AG04450 (cell line): ENCODE measurements at regions of chr20 and their contacts with region 1.

Region 1: GRCh38 chr20:61234008-61234802 is 17.9 kb upstream of the CDH4 start:
- DNase-seq: no peak
- H3K4me3 ChIP-seq: no peak overlapping the region
- H3K27ac ChIP-seq: no peak overlapping the region
- H3K27me3 ChIP-seq: peaks cover 8% of the 10 kb centered on the region
- CTCF ChIP-seq: no peak

Region 2: DNA sequence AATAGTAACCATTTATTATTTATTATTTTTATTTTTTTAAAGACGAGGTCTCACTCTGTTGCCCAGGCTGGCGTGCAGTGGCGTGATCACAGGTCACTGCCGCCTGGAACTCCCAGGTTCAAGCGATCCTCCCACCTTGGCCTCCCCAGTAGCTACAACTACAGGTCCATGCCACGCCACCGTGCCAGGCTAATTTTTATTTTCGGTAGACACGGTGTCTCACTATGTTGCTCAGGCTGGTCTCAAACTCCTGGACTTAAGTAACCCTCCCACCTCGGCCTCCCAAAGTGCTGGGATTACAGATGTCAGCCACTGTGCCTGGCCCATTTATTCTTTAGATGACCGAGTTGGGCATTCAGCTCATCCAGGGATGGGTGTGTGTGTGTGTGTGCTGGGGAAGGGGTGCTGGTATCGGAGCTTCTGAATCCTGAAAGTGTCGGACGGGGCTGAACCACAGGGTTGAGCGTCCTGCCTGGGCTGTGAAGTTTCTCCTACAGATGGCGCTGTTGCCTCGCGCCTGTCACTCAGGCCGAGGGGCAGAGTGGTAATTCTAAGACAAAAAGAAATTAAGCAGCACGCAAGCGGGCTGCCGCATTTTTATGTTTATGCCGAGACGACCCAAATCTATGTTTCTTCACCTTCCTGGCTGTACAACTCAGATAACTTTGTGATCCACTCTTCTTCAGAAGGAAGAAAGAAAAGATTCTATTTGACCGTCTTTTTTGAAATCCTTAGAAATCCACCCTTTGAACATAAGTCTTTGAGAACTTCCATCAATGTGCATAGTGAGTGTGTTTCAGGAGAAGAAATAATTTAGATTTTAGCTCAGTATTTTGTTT is 1023.2 kb before region 1 on chr20:
- CTCF ChIA-PET with region 1: interaction called, 24 read pairs
- POLR2A ChIA-PET with region 1: no interaction called
- DNase-seq: peak; percentile 27
- H3K4me3 ChIP-seq: no peak overlapping the region
- H3K27ac ChIP-seq: no peak overlapping the region
- H3K27me3 ChIP-seq: peaks cover 8% of the 10 kb centered on the region
- CTCF ChIP-seq: peak; percentile 96

Region 3: GRCh38 chr20:60598528-60598927 is 635.7 kb before region 1 on chr20:
- CTCF ChIA-PET with region 1: no interaction called
- POLR2A ChIA-PET with region 1: no interaction called
- DNase-seq: no peak
- H3K4me3 ChIP-seq: no peak overlapping the region
- H3K27ac ChIP-seq: no peak overlapping the region
- H3K27me3 ChIP-seq: no peaks in the 10 kb centered on the region
- CTCF ChIP-seq: no peak

Region 4: GRCh38 chr20:61178561-61179071 is 55.6 kb before region 1 on chr20:
- CTCF ChIA-PET with region 1: interaction called, 22 read pairs
- POLR2A ChIA-PET with region 1: no interaction called
- DNase-seq: no peak
- H3K4me3 ChIP-seq: no peak overlapping the region
- H3K27ac ChIP-seq: no peak overlapping the region
- H3K27me3 ChIP-seq: peaks cover 11% of the 10 kb centered on the region
- CTCF ChIP-seq: no peak

Region 5: GRCh38 chr20:61192342-61192950 is 41.8 kb before region 1 on chr20:
- CTCF ChIA-PET with region 1: interaction called, 27 read pairs
- POLR2A ChIA-PET with region 1: no interaction called
- DNase-seq: no peak
- H3K4me3 ChIP-seq: no peak overlapping the region
- H3K27ac ChIP-seq: no peak overlapping the region
- H3K27me3 ChIP-seq: peaks cover 4% of the 10 kb centered on the region
- CTCF ChIP-seq: no peak

Region 6: GRCh38 chr20:61219021-61219431 is 15.2 kb before region 1 on chr20:
- CTCF ChIA-PET with region 1: interaction called, 37 read pairs
- POLR2A ChIA-PET with region 1: no interaction called
- DNase-seq: no peak
- H3K4me3 ChIP-seq: no peak overlapping the region
- H3K27ac ChIP-seq: no peak overlapping the region
- H3K27me3 ChIP-seq: peaks cover 17% of the 10 kb centered on the region
- CTCF ChIP-seq: no peak

Region 7: GRCh38 chr20:61317966-61318530 is 83.8 kb after region 1 on chr20:
- CTCF ChIA-PET with region 1: no interaction called
- POLR2A ChIA-PET with region 1: no interaction called
- DNase-seq: no peak
- H3K4me3 ChIP-seq: no peak overlapping the region
- H3K27ac ChIP-seq: no peak overlapping the region
- H3K27me3 ChIP-seq: no peaks in the 10 kb centered on the region
- CTCF ChIP-seq: no peak